ENCODE measurements at regions of chr17 and their contacts with region 1.

Region 1: GRCh38 chr17:7989781-7990655 is 12.4 kb upstream of the GUCY2D start:
- DNase-seq: peak; percentile 97
- ATAC-seq: peak; percentile 91
- H3K4me3 Mint-ChIP-seq: peak overlapping the region; percentile 71
- H3K27ac Mint-ChIP-seq: no peak overlapping the region
- H3K4me1 Mint-ChIP-seq: peaks cover 12% of the 10 kb centered on the region
- H3K27me3 Mint-ChIP-seq: peaks cover 37% of the 10 kb centered on the region
- CTCF ChIP-seq: peak; percentile 90

Region 2: GRCh38 chr17:7844292-7845154 is 145.5 kb before region 1 on chr17:
- CTCF ChIA-PET with region 1: interaction called, 10 read pairs
- POLR2A ChIA-PET with region 1: no interaction called
- DNase-seq: peak; percentile 89
- ATAC-seq: peak; percentile 81
- H3K4me3 Mint-ChIP-seq: peak overlapping the region; percentile 81
- H3K27ac Mint-ChIP-seq: no peak overlapping the region
- H3K4me1 Mint-ChIP-seq: peaks cover 21% of the 10 kb centered on the region
- H3K27me3 Mint-ChIP-seq: peaks cover 39% of the 10 kb centered on the region
- CTCF ChIP-seq: no peak

Region 3: GRCh38 chr17:7915611-7916382 is 74.2 kb before region 1 on chr17 and contains the start of gene RNF227:
- CTCF ChIA-PET with region 1: interaction called, 53 read pairs
- POLR2A ChIA-PET with region 1: no interaction called
- DNase-seq: peak; percentile 90
- ATAC-seq: peak; percentile 94
- H3K4me3 Mint-ChIP-seq: peak within 1 kb of the TSS; percentile 72
- H3K27ac Mint-ChIP-seq: no peak within 1 kb of the TSS
- H3K4me1 Mint-ChIP-seq: peaks cover 13% of the 10 kb centered on the region
- H3K27me3 Mint-ChIP-seq: peaks cover 70% of the 10 kb centered on the region
- CTCF ChIP-seq: no peak
- total RNA-seq, gene RNF227: 0.83 to 1.8 TPM (median 0.94 TPM) in 3 replicates

Region 4: DNA sequence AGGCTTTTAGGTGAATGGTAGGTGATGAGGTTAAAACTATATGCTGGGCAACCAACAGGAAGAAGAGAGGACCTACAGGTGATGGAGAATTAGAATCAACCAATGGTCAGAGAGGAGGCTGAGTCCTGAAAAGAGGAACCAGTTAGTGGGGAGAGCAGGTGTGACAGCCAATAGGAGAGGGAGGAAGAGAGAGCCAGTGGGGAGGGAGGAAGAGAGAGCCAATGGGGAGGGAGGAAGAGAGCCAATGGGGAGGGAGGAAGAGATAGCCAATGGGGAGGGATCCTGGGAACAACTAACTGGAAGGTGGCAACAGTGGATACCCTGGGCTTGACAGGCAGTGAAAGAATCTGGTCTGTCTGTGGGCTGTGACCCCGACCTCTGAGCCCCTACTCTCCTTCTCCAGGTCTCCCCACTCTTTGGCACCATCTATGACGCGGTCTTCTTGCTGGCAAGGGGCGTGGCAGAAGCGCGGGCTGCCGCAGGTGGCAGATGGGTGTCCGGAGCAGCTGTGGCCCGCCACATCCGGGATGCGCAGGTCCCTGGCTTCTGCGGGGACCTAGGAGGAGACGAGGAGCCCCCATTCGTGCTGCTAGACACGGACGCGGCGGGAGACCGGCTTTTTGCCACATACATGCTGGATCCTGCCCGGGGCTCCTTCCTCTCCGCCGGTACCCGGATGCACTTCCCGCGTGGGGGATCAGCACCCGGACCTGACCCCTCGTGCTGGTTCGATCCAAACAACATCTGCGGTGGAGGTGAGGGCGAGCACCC is 16.1 kb after region 1 on chr17:
- CTCF ChIA-PET with region 1: interaction called, 18 read pairs
- POLR2A ChIA-PET with region 1: no interaction called
- DNase-seq: no peak
- ATAC-seq: peak; percentile 49
- H3K4me3 Mint-ChIP-seq: no peak overlapping the region
- H3K27ac Mint-ChIP-seq: no peak overlapping the region
- H3K4me1 Mint-ChIP-seq: peaks cover 19% of the 10 kb centered on the region
- H3K27me3 Mint-ChIP-seq: peaks cover 54% of the 10 kb centered on the region
- CTCF ChIP-seq: no peak

Region 5: DNA sequence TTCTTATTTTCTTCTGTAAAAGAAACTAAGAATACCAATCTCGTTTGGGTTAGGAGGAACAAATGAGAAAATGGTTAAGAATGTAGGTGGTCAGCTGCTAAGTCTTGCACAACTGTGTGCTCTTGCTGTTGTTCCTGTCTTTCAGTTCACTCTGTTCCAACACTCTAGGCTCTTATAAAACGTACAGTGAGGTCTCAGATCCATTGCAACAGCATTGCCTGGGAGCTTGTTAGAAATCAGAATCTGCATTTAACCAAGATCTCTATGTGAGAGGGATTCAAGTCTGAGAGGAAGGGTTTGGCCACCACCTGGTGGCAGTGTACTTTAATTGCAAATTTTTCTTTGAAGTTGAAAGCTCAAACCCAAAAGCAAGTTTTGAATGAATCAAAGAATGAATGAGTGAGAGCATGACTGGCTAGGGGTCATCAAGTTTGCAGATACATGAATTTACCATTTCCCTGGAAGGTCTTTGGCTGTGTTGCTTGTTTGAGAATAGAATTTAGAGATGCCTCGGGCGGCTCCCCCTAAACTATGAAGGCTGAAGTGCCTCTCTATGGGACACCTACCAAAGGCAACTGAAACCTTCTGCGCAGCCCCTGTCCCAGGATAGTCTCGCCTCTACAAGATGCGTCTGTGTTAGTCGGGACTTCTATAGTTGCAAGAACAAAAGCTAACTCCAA is 51.4 kb after region 1 on chr17:
- CTCF ChIA-PET with region 1: interaction called, 37 read pairs
- POLR2A ChIA-PET with region 1: interaction called, 5 read pairs
- DNase-seq: no peak
- ATAC-seq: peak; percentile 16; the same call in 1 of the 2 replicates
- H3K4me3 Mint-ChIP-seq: no peak overlapping the region
- H3K27ac Mint-ChIP-seq: no peak overlapping the region
- H3K4me1 Mint-ChIP-seq: peaks cover 22% of the 10 kb centered on the region
- H3K27me3 Mint-ChIP-seq: peaks cover 14% of the 10 kb centered on the region
- CTCF ChIP-seq: 0 out of 2 replicates have a peak, but pooled peaks have one; percentile 21

Region 6: DNA sequence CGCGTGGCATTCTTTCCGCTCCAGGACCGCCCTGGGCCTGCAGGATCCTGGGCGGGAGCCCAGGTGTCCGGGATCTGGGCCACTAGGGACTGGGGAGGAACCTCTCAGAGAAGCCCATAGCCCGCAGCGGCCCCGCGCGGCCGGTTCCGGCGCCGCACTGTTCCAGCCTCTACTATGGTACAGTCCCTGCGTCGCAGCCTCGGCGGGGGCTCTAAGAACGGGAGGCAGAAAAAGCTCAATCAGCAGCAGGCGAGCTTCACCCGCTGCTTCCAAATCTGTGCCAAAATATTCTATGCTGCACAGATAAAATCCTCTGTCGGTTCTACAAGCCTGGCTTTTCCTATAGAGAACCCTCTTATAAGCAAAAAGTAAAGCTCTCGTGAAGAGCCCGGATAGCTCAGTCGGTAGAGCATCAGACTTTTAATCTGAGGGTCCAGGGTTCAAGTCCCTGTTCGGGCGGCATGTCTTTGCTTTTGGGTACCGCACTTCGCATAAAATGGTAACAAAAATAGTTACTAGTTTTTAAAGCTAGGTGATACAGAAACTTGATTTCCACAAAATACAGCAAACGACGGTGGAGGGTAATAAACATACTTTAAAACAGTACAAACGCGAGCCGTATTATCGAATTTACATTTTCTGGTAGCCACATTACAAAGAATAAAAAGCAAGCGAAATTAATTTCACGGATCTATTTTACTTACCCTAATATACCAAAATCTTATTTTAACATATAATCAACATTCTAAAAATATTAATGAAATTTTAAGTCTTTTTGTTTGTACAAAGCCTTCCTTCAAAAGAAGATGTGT is 129.0 kb after region 1 on chr17:
- CTCF ChIA-PET with region 1: interaction called, 11 read pairs
- POLR2A ChIA-PET with region 1: no interaction called
- DNase-seq: peak; percentile 91
- ATAC-seq: peak; percentile 44
- H3K4me3 Mint-ChIP-seq: peak overlapping the region; percentile 85
- H3K27ac Mint-ChIP-seq: 0 out of 2 replicates have a peak overlapping the region, but pooled peaks have one; percentile 69
- H3K4me1 Mint-ChIP-seq: peaks cover 9% of the 10 kb centered on the region
- H3K27me3 Mint-ChIP-seq: peaks cover 73% of the 10 kb centered on the region
- CTCF ChIP-seq: peak; percentile 41; the same call in 1 of the 2 replicates